Calu3 (cell line): ENCODE measurements at regions of chr2 and their contacts with region 1.

Region 1: GRCh38 chr2:117555965-117556364 is 258.5 kb upstream of the DDX18 start:
- DNase-seq: peak; percentile 2
- H3K4me3 Mint-ChIP-seq: no peak overlapping the region
- H3K27ac Mint-ChIP-seq: peak overlapping the region; percentile 70
- H3K4me1 Mint-ChIP-seq: peaks cover 54% of the 10 kb centered on the region
- H3K27me3 Mint-ChIP-seq: no peaks in the 10 kb centered on the region
- CTCF ChIP-seq: no peak

Region 2: DNA sequence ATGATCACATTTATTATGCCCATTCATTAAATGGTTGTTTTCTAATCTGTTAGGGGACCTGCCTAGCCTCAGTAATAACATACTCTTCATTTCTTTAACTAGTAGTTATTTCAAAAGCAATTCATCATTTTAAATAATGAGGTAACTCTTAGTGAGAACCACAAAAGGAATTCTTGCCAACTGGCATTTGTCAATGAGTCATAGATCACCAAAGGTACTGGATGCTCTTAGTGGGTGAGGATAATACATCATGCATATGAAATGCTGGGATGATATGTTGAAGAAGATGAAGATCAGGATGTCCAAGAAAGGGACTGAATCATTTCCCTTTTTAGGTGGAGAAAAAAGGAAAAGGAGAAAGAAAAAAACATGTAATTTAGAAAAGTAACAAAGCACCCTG is 567.7 kb before region 1 on chr2:
- CTCF ChIA-PET with region 1: no interaction called
- intact Hi-C with region 1: loop called (anchors 1 kb)
- DNase-seq: no peak
- H3K4me3 Mint-ChIP-seq: no peak overlapping the region
- H3K27ac Mint-ChIP-seq: no peak overlapping the region
- H3K4me1 Mint-ChIP-seq: no peaks in the 10 kb centered on the region
- H3K27me3 Mint-ChIP-seq: no peaks in the 10 kb centered on the region
- CTCF ChIP-seq: no peak

Region 3: GRCh38 chr2:117621326-117621725 is 65.4 kb after region 1 on chr2:
- CTCF ChIA-PET with region 1: no interaction called
- intact Hi-C with region 1: loop called (anchors 5 kb)
- DNase-seq: no peak
- H3K4me3 Mint-ChIP-seq: no peak overlapping the region
- H3K27ac Mint-ChIP-seq: no peak overlapping the region
- H3K4me1 Mint-ChIP-seq: no peaks in the 10 kb centered on the region
- H3K27me3 Mint-ChIP-seq: no peaks in the 10 kb centered on the region
- CTCF ChIP-seq: no peak